ENCODE measurements at regions of chr7 and their contacts with region 1.

Region 1: DNA sequence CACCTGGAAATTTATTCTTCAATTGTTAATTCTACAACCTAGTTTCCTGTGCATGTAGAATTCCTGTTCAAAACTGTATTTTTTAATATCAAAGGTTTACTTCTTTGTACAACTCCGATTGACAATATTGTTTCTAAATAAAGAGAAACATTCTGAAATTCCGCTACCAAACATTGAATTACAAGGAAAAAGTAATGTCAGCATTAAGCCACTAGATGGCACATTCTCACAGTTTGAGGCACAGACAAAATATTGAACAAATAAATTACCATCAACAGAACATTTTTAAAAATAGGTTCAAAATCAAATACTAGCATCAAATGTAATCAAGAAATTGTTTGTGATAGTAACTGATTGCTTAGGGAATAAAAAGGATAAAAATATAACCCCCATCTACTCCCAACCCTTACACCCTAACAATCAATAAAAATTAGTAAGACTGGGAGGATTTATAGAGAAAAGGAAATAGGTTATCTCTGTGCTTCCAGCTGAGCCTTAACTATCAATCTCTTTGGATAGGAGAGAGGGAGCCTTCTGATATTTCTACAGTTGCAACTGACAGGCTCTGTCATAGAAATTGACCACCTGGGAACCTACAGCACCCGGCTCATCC is 86.6 kb upstream of the C7orf33 start:
- DNase-seq: peak; percentile 29
- CTCF ChIP-seq: peak; percentile 77

Region 2: GRCh38 chr7:148478551-148478950 is 25.4 kb before region 1 on chr7:
- CTCF ChIA-PET with region 1: no interaction called
- POLR2A ChIA-PET with region 1: no interaction called
- DNase-seq: no peak
- CTCF ChIP-seq: no peak

Region 3: GRCh38 chr7:148527707-148528168 is 23.8 kb after region 1 on chr7:
- CTCF ChIA-PET with region 1: interaction called, 24 read pairs
- POLR2A ChIA-PET with region 1: no interaction called
- DNase-seq: peak; percentile 73
- CTCF ChIP-seq: peak; percentile 74

Region 4: DNA sequence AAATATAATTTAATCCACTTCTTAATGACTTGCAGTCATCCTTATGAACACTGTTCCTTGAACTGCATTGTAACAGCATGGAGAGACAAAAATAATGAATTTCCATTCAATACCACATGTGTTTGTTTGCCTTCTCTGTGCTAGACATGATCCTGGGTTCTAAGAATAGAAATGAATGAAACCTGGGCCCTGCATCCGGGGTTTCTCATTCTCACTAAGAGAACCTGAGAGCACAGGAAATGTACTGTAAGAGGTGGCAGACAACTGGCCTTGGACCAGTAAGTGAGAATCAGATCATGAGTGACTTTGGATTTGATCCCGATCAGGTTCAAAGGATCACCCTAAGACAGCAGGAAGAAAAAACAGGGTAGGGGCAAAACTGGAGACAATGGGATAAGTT is 157.5 kb after region 1 on chr7:
- CTCF ChIA-PET with region 1: no interaction called
- POLR2A ChIA-PET with region 1: no interaction called
- DNase-seq: no peak
- CTCF ChIP-seq: no peak